CD4-positive, alpha-beta T cell (primary cell): ENCODE measurements at regions of chr1 and their contacts with region 1.

Region 1: GRCh38 chr1:231421993-231422764 is at the start of gene EGLN1:
- DNase-seq: peak; percentile 65 to 92 (median 80)
- ATAC-seq: peak; percentile 83
- H3K4me3 ChIP-seq: peak within 1 kb of the TSS; percentile 83
- H3K4me3 Mint-ChIP-seq: peak within 1 kb of the TSS; percentile 90
- H3K27ac ChIP-seq: peak within 1 kb of the TSS; percentile 36 to 83
- H3K27ac Mint-ChIP-seq: peak within 1 kb of the TSS; percentile 87
- H3K4me1 ChIP-seq: peaks cover 21% of the 10 kb centered on the region
- H3K4me1 Mint-ChIP-seq: peaks cover 49% of the 10 kb centered on the region
- H3K27me3 ChIP-seq: no peaks in the 10 kb centered on the region
- H3K27me3 Mint-ChIP-seq: no peaks in the 10 kb centered on the region
- CTCF ChIP-seq: peak; percentile 51
- total RNA-seq, gene EGLN1: 8.2 to 9.4 TPM

Region 2: GRCh38 chr1:230066466-230067404 is 1355.4 kb before region 1 on chr1 and contains the start of gene GALNT2:
- CTCF ChIA-PET with region 1: no interaction called
- POLR2A ChIA-PET with region 1: no interaction called
- intact Hi-C with region 1: loop called in 1 of 2 experiments (anchors 10 kb)
- DNase-seq: peak; percentile 74 to 97 (median 86)
- ATAC-seq: peak; percentile 91
- H3K4me3 ChIP-seq: peak within 1 kb of the TSS; percentile 85
- H3K4me3 Mint-ChIP-seq: peak within 1 kb of the TSS; percentile 97
- H3K27ac ChIP-seq: peak within 1 kb of the TSS; percentile 46 to 73
- H3K27ac Mint-ChIP-seq: peak within 1 kb of the TSS; percentile 93
- H3K4me1 ChIP-seq: peaks cover 15% of the 10 kb centered on the region
- H3K4me1 Mint-ChIP-seq: peaks cover 42% of the 10 kb centered on the region
- H3K27me3 ChIP-seq: no peaks in the 10 kb centered on the region
- H3K27me3 Mint-ChIP-seq: no peaks in the 10 kb centered on the region
- CTCF ChIP-seq: no peak
- total RNA-seq, gene GALNT2: 11.0 to 11.4 TPM

Region 3: DNA sequence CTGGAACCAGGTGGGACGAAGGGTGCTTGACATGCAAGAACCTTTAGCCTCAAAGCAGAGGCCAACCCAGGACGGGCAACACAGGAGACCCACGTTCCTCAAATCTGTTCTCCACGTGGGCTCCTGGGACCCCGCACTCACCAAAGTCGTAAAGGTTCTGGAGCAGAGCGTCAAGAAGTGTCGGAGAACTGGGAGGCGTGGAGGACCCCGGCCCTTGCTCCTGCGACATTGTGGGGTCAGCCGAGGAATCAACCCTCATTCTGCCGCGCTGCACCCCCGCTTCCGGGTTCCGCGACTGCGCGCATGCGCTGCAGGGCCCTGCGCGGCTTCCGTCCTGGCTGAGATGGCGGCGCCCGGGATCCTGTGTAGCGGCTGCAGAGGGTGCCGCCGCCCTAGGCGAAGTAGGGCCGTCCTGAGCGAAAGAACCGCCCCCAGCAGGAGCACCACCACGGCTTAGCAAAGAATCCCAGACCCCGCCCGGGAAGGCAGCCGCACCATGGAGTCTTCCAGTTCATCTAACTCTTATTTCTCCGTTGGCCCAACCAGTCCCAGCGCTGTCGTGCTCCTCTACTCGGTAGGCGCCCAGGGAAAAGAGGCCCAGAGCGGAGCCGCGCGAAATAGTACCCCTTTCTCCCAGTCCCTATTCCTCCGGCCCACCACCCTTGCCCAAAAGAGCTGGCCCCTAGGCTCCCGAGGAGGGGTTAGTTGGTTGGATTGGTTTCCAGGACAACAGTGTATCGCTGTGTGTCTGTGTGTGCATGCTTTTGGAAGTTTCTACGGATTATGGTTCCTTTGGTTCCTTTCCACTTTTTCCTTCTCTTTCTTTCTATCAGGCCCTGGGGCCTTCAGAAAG is 181.1 kb before region 1 on chr1 and contains the start of gene GNPAT:
- CTCF ChIA-PET with region 1: no interaction called
- POLR2A ChIA-PET with region 1: no interaction called
- intact Hi-C with region 1: loop called in 1 of 2 experiments (anchors 5 kb)
- DNase-seq: peak; percentile 83 to 95 (median 90)
- ATAC-seq: peak; percentile 95
- H3K4me3 ChIP-seq: peak within 1 kb of the TSS; percentile 93
- H3K4me3 Mint-ChIP-seq: peak within 1 kb of the TSS; percentile 98
- H3K27ac ChIP-seq: peak within 1 kb of the TSS; percentile 67 to 77
- H3K27ac Mint-ChIP-seq: peak within 1 kb of the TSS; percentile 87
- H3K4me1 ChIP-seq: peaks cover 30% of the 10 kb centered on the region
- H3K4me1 Mint-ChIP-seq: peaks cover 83% of the 10 kb centered on the region
- H3K27me3 ChIP-seq: no peaks in the 10 kb centered on the region
- H3K27me3 Mint-ChIP-seq: no peaks in the 10 kb centered on the region
- CTCF ChIP-seq: no peak
- total RNA-seq, gene GNPAT: 11.8 to 12.8 TPM

Region 4: GRCh38 chr1:231357831-231358354 is 64.3 kb before region 1 on chr1:
- CTCF ChIA-PET with region 1: interaction called, 3 read pairs
- POLR2A ChIA-PET with region 1: interaction called, 6 read pairs
- intact Hi-C with region 1: loop called in 1 of 2 experiments (anchors 5 kb)
- DNase-seq: peak in 7 of 14 experiments; percentile 19 to 76 (median 47)
- ATAC-seq: peak; percentile 91
- H3K4me3 ChIP-seq: no peak overlapping the region
- H3K4me3 Mint-ChIP-seq: no peak overlapping the region
- H3K27ac ChIP-seq: no peak overlapping the region
- H3K27ac Mint-ChIP-seq: peak overlapping the region; percentile 51
- H3K4me1 ChIP-seq: no peaks in the 10 kb centered on the region
- H3K4me1 Mint-ChIP-seq: peaks cover 7% of the 10 kb centered on the region
- H3K27me3 ChIP-seq: no peaks in the 10 kb centered on the region
- H3K27me3 Mint-ChIP-seq: no peaks in the 10 kb centered on the region
- CTCF ChIP-seq: peak; percentile 88

Region 5: DNA sequence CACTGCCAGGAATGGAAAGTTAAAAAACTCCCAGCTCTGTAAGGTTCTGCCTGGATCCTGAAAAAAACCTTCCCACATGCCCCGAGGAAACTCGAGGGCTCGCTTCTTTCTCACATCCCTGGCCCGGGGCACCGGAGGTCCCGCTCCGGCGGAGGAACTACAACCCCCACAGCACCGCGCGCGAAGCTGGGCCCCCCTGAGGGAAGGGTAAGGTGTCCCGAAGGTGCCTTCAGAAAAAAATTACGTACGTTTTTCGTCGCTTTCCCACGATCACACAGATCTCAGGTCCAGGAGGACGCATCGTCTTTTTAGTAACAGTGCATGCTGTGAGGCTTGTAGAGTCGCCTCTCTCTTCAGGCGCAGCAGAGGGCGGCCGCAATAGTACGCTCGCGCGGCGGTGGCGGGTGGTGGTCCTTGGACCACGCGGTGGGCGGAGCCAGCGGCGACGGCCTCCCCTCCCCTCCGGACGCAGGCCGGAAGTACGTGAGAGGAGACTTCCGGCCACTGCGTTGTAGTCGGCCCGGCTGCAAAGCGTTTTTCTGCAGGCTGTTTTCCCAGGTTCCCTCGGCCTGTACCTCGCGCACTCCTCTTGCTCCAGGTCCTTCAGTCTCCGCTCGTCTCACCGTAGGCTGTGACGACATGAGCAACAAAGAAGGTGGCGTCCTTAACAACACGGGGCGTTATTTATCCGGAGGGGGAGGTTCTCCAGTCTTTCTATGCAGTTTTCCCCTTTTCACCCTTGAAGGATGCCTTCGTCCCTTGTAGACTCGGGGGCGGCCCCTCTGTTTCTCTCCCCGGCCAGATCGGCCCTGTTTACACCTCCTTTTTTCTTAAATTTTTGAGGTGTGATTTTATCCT is 106.2 kb after region 1 on chr1 and contains the start of gene TSNAX:
- CTCF ChIA-PET with region 1: interaction called, 3 read pairs
- POLR2A ChIA-PET with region 1: interaction called, 29 read pairs
- intact Hi-C with region 1: loop called (anchors 1 to 2 kb)
- DNase-seq: peak; percentile 81 to 96 (median 88)
- ATAC-seq: peak; percentile 85
- H3K4me3 ChIP-seq: peak within 1 kb of the TSS; percentile 70
- H3K4me3 Mint-ChIP-seq: peak within 1 kb of the TSS; percentile 94
- H3K27ac ChIP-seq: peak within 1 kb of the TSS; percentile 84 to 89
- H3K27ac Mint-ChIP-seq: peak within 1 kb of the TSS; percentile 97
- H3K4me1 ChIP-seq: peaks cover 38% of the 10 kb centered on the region
- H3K4me1 Mint-ChIP-seq: peaks cover 46% of the 10 kb centered on the region
- H3K27me3 ChIP-seq: no peaks in the 10 kb centered on the region
- H3K27me3 Mint-ChIP-seq: no peaks in the 10 kb centered on the region
- CTCF ChIP-seq: no peak
- total RNA-seq, gene TSNAX: 33.5 to 35.7 TPM

Region 6: DNA sequence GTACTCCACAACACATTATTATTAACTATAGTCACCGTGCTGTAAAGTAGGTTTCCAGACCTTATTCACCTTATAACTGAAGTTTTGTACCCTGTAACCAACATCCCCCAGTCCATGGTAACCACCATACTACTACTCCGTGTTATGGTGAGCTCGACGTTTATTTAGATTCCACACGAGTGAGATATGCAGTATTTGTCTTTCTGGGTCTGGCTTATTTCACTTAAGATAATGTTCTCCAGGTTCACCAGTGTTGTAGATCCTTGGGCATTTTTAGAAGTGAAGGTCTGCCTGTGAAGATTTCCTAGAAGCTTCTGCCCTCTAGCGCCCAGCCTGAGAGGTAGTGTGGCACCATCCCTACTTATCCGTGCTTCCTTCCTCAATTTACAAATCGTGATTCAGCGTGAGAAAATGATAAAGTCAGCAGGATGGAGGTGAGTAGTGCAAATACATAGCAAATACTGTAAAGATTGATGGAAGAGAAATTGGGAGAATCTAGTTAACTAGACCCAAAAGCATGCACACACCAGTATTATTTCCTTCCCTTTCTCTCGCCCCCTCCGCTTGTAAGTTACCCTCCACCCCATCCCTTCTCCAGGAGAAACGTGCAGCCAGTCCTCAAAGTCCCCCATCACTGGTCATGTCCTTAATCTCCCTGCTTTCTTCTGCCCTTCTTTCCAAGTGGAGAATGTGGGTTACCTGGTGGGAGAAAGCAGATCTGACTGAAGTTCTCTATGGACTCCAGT is 168.4 kb after region 1 on chr1:
- CTCF ChIA-PET with region 1: no interaction called
- POLR2A ChIA-PET with region 1: no interaction called
- intact Hi-C with region 1: loop called in 1 of 2 experiments (anchors 10 kb)
- DNase-seq: peak in 10 of 14 experiments; percentile 4 to 67 (median 26)
- ATAC-seq: peak; percentile 61
- H3K4me3 ChIP-seq: no peak overlapping the region
- H3K4me3 Mint-ChIP-seq: no peak overlapping the region
- H3K27ac ChIP-seq: no peak overlapping the region
- H3K27ac Mint-ChIP-seq: no peak overlapping the region
- H3K4me1 ChIP-seq: no peaks in the 10 kb centered on the region
- H3K4me1 Mint-ChIP-seq: no peaks in the 10 kb centered on the region
- H3K27me3 ChIP-seq: no peaks in the 10 kb centered on the region
- H3K27me3 Mint-ChIP-seq: no peaks in the 10 kb centered on the region
- CTCF ChIP-seq: peak; percentile 55

Region 7: GRCh38 chr1:231770506-231771175 is 348.5 kb after region 1 on chr1:
- CTCF ChIA-PET with region 1: no interaction called
- POLR2A ChIA-PET with region 1: no interaction called
- intact Hi-C with region 1: no loop called
- DNase-seq: no peak
- ATAC-seq: no peak
- H3K4me3 ChIP-seq: no peak overlapping the region
- H3K4me3 Mint-ChIP-seq: no peak overlapping the region
- H3K27ac ChIP-seq: no peak overlapping the region
- H3K27ac Mint-ChIP-seq: no peak overlapping the region
- H3K4me1 ChIP-seq: no peaks in the 10 kb centered on the region
- H3K4me1 Mint-ChIP-seq: no peaks in the 10 kb centered on the region
- H3K27me3 ChIP-seq: no peaks in the 10 kb centered on the region
- H3K27me3 Mint-ChIP-seq: no peaks in the 10 kb centered on the region
- CTCF ChIP-seq: no peak

Region 8: GRCh38 chr1:232493869-232494268 is 1071.7 kb after region 1 on chr1:
- CTCF ChIA-PET with region 1: no interaction called
- POLR2A ChIA-PET with region 1: no interaction called
- intact Hi-C with region 1: no loop called
- DNase-seq: no peak
- ATAC-seq: no peak
- H3K4me3 ChIP-seq: no peak overlapping the region
- H3K4me3 Mint-ChIP-seq: no peak overlapping the region
- H3K27ac ChIP-seq: no peak overlapping the region
- H3K27ac Mint-ChIP-seq: no peak overlapping the region
- H3K4me1 ChIP-seq: no peaks in the 10 kb centered on the region
- H3K4me1 Mint-ChIP-seq: no peaks in the 10 kb centered on the region
- H3K27me3 ChIP-seq: no peaks in the 10 kb centered on the region
- H3K27me3 Mint-ChIP-seq: no peaks in the 10 kb centered on the region
- CTCF ChIP-seq: no peak